ENCODE measurements at regions of chr10 and their contacts with region 1.

Region 1: GRCh38 chr10:102904346-102904745 is 13.7 kb upstream of the CNNM2 start:
- DNase-seq: no peak
- H3K4me3 ChIP-seq: no peak overlapping the region
- H3K27ac ChIP-seq: no peak overlapping the region
- H3K4me1 ChIP-seq: no peaks in the 10 kb centered on the region
- H3K27me3 ChIP-seq: no peaks in the 10 kb centered on the region
- CTCF ChIP-seq: no peak
- POLR2A ChIP-seq: no peak

Region 2: GRCh38 chr10:102729029-102730026 is 175.0 kb before region 1 on chr10:
- intact Hi-C with region 1: loop called (anchors 5 kb)
- DNase-seq: peak; percentile 89 to 91
- H3K4me3 ChIP-seq: no peak overlapping the region
- H3K27ac ChIP-seq: peak overlapping the region in 1 of 2 donors; percentile 23
- H3K4me1 ChIP-seq: no peaks in the 10 kb centered on the region
- H3K27me3 ChIP-seq: no peaks in the 10 kb centered on the region
- CTCF ChIP-seq: peak; percentile 92 to 96 (median 94)
- POLR2A ChIP-seq: no peak

Region 3: DNA sequence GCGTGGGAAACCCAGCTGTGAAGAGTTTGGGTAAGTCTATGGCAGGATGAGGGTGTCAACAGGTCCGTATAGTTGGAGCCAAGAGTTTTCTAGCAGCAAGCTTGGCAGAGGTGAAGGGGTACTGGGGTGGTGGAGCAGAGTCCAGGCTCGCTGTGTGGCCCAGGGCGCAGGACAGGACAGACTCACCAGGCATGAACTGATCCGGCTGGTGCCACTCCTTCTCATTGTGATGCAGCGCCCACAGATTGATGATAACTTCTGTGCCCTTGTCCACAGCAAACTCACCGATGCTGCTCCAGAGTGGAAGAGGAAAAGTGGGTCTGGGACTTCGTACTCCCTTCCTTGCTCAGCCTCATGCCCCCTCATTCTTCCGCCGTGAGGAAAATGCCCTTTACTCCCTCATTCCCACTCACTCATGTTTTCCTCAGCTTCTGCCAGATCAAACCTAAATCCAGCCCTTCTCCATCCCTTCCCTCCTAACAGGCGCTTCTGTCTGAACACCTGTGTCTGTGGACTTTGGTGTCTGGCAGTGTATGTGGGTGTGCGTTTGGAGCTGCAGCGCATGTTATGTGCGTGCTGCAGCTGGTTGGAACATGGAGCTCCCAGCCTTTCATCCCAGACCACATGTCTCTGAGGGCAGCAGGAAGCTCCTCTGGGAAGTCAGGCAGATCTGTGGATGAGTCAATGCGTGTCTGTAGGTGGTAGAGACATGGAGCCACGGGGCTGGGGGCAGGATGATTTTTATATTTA is 72.8 kb before region 1 on chr10:
- intact Hi-C with region 1: loop called (anchors 5 kb)
- DNase-seq: no peak
- H3K4me3 ChIP-seq: no peak overlapping the region
- H3K27ac ChIP-seq: no peak overlapping the region
- H3K4me1 ChIP-seq: no peaks in the 10 kb centered on the region
- H3K27me3 ChIP-seq: no peaks in the 10 kb centered on the region
- CTCF ChIP-seq: no peak
- POLR2A ChIP-seq: no peak

Region 4: DNA sequence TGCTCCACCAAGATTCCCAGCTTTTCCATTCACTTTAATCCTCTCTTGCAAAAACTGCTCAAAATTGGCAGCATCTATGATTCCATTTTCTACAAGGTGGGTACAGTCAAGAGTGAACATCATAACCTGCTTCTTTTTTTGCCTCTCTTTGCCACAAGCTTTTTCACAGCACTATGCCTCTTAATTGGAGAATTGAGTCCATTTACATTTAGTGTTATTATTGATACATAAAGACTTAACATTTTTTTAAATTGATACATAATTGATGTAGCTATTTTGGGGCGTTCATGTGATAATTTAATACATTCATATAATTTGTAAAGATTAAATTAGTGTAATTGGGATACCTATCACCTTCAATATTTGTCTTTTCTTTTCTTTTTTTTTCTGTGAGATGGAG is 16.3 kb before region 1 on chr10:
- intact Hi-C with region 1: no loop called
- DNase-seq: no peak
- H3K4me3 ChIP-seq: no peak overlapping the region
- H3K27ac ChIP-seq: no peak overlapping the region
- H3K4me1 ChIP-seq: no peaks in the 10 kb centered on the region
- H3K27me3 ChIP-seq: no peaks in the 10 kb centered on the region
- CTCF ChIP-seq: no peak
- POLR2A ChIP-seq: no peak

Measured in uterus (tissue), 4 donors.